ENCODE measurements at regions of chr2 and their contacts with region 1.

Region 1: DNA sequence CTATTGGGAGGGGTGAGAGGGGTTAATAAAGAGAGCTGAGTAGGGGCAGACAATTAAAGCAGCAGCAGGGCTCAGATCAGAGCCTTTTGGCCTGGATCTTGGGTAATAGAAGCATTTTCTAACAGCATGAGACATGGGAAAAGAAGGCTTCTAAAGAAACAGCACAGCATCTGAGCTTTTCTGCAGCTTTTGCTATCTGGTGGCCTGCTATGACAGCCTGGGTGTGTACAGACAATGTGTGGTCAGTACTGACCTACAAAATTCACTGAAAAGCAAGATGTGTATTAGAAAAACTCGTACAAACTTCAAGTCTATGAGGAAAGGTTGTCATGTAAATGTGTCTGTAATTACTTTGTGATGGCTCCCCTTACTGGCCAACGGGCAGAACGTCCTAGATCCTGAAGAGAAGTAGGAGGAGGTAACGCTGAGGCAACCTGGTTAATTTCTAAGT is 95.6 kb downstream of the GALNT3 start:
- DNase-seq: peak; percentile 27
- ATAC-seq: peak; percentile 95
- H3K4me3 ChIP-seq: no peak overlapping the region
- H3K27ac ChIP-seq: no peak overlapping the region
- H3K4me1 ChIP-seq: no peaks in the 10 kb centered on the region
- H3K27me3 ChIP-seq: no peaks in the 10 kb centered on the region
- CTCF ChIP-seq: peak; percentile 39 to 69 (median 64); a peak in 5 of 6 replicates
- EP300 ChIP-seq: no peak
- POLR2A ChIP-seq: no peak
- RAD21 ChIP-seq: peak; percentile 53

Region 2: GRCh38 chr2:165401285-165401852 is 297.1 kb before region 1 on chr2:
- CTCF ChIA-PET with region 1: interaction called, 100 read pairs
- POLR2A ChIA-PET with region 1: no interaction called
- RAD21 ChIA-PET with region 1: interaction called, 15 read pairs
- SMC1A ChIA-PET with region 1: interaction called, 114 read pairs
- in situ Hi-C with region 1: no loop called
- intact Hi-C with region 1: loop called (anchors 1 kb)
- DNase-seq: peak; percentile 9
- ATAC-seq: peak; percentile 77
- H3K4me3 ChIP-seq: no peak overlapping the region
- H3K27ac ChIP-seq: no peak overlapping the region
- H3K4me1 ChIP-seq: no peaks in the 10 kb centered on the region
- H3K27me3 ChIP-seq: no peaks in the 10 kb centered on the region
- CTCF ChIP-seq: peak; percentile 54 to 69 (median 66); a peak in 5 of 6 replicates
- EP300 ChIP-seq: no peak
- POLR2A ChIP-seq: no peak
- RAD21 ChIP-seq: peak; percentile 81

Region 3: GRCh38 chr2:165450156-165450555 is 248.3 kb before region 1 on chr2:
- CTCF ChIA-PET with region 1: interaction called, 56 read pairs
- POLR2A ChIA-PET with region 1: no interaction called
- RAD21 ChIA-PET with region 1: interaction called, 20 read pairs
- SMC1A ChIA-PET with region 1: interaction called, 45 read pairs
- in situ Hi-C with region 1: no loop called
- intact Hi-C with region 1: no loop called
- DNase-seq: no peak
- ATAC-seq: peak; percentile 59
- H3K4me3 ChIP-seq: no peak overlapping the region
- H3K27ac ChIP-seq: no peak overlapping the region
- H3K4me1 ChIP-seq: no peaks in the 10 kb centered on the region
- H3K27me3 ChIP-seq: no peaks in the 10 kb centered on the region
- CTCF ChIP-seq: no peak; a peak in 1 of 6 replicates
- EP300 ChIP-seq: no peak
- POLR2A ChIP-seq: no peak
- RAD21 ChIP-seq: no peak

Region 4: GRCh38 chr2:165499131-165499530 is 199.3 kb before region 1 on chr2:
- CTCF ChIA-PET with region 1: interaction called, 10 read pairs
- POLR2A ChIA-PET with region 1: no interaction called
- RAD21 ChIA-PET with region 1: interaction called, 3 read pairs
- SMC1A ChIA-PET with region 1: interaction called, 8 read pairs
- in situ Hi-C with region 1: no loop called
- intact Hi-C with region 1: no loop called
- DNase-seq: no peak
- ATAC-seq: no peak
- H3K4me3 ChIP-seq: no peak overlapping the region
- H3K27ac ChIP-seq: no peak overlapping the region
- H3K4me1 ChIP-seq: no peaks in the 10 kb centered on the region
- H3K27me3 ChIP-seq: no peaks in the 10 kb centered on the region
- CTCF ChIP-seq: no peak
- EP300 ChIP-seq: no peak
- POLR2A ChIP-seq: no peak
- RAD21 ChIP-seq: no peak

Region 5: GRCh38 chr2:165601928-165602521 is 96.4 kb before region 1 on chr2:
- CTCF ChIA-PET with region 1: interaction called, 14 read pairs
- POLR2A ChIA-PET with region 1: no interaction called
- RAD21 ChIA-PET with region 1: interaction called, 4 read pairs
- SMC1A ChIA-PET with region 1: interaction called, 5 read pairs
- in situ Hi-C with region 1: no loop called
- intact Hi-C with region 1: no loop called
- DNase-seq: no peak
- ATAC-seq: no peak
- H3K4me3 ChIP-seq: no peak overlapping the region
- H3K27ac ChIP-seq: no peak overlapping the region
- H3K4me1 ChIP-seq: no peaks in the 10 kb centered on the region
- H3K27me3 ChIP-seq: no peaks in the 10 kb centered on the region
- CTCF ChIP-seq: no peak
- EP300 ChIP-seq: no peak
- POLR2A ChIP-seq: no peak
- RAD21 ChIP-seq: no peak

Region 6: DNA sequence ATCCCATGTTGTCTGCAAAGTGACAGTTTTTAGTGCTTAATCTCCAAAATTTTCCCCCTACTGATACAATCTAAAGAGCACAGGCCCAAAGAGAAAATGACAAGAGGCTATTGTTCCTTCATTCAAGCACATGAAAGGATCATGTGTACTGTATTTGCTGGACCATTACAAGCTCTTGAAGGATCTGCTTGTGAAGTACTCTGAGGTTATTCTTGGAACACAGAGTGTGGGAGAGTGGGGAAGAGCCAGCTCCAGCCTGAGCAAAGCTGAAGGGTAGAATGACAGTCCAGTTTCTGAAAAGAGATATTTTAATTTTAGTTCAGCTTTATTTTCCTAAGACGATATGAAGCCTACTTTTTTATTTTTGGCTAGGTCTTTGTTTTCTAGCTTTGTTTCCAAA is 16.6 kb before region 1 on chr2:
- CTCF ChIA-PET with region 1: interaction called, 34 read pairs
- POLR2A ChIA-PET with region 1: interaction called, 4 read pairs
- RAD21 ChIA-PET with region 1: interaction called, 4 read pairs
- SMC1A ChIA-PET with region 1: interaction called, 31 read pairs
- in situ Hi-C with region 1: no loop called
- intact Hi-C with region 1: no loop called
- DNase-seq: no peak
- ATAC-seq: no peak
- H3K4me3 ChIP-seq: no peak overlapping the region
- H3K27ac ChIP-seq: no peak overlapping the region
- H3K4me1 ChIP-seq: no peaks in the 10 kb centered on the region
- H3K27me3 ChIP-seq: no peaks in the 10 kb centered on the region
- CTCF ChIP-seq: no peak
- EP300 ChIP-seq: no peak
- POLR2A ChIP-seq: no peak
- RAD21 ChIP-seq: no peak

Region 7: DNA sequence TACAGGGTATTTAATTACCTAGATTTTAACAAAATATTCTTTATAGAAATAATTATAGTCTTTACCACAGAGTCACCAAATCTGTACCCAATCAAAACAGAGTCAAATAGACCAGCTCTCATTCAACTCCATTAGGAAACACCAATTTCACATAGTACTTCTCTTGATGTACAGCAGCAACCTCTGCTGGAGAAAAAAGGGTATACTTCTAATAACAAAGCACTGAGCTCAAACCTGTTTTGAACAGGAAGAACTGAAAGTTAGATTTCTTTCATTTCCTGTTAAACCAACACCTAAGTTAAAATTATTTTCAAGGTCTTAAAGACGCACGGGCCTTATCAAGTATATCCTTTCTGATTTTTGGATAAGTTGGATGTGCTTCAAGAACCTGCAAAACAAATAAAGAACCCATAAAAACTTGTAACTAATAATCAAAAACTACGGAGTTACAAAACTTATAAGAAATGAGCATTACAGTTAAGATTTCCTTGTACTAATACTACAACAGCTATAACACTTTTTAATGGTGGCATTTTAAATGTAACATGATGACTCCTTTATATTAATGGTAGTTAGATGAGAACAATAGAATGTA is 176.1 kb after region 1 on chr2:
- CTCF ChIA-PET with region 1: interaction called, 17 read pairs
- POLR2A ChIA-PET with region 1: no interaction called
- RAD21 ChIA-PET with region 1: interaction called, 21 read pairs
- SMC1A ChIA-PET with region 1: interaction called, 37 read pairs
- in situ Hi-C with region 1: no loop called
- intact Hi-C with region 1: loop called (anchors 5 kb)
- DNase-seq: peak; percentile 36
- ATAC-seq: peak; percentile 86
- H3K4me3 ChIP-seq: no peak overlapping the region
- H3K27ac ChIP-seq: peak overlapping the region; percentile 12; the same call in 1 of the 2 replicates
- H3K4me1 ChIP-seq: peaks cover 7% of the 10 kb centered on the region; the same call in 1 of the 2 replicates
- H3K27me3 ChIP-seq: no peaks in the 10 kb centered on the region
- CTCF ChIP-seq: peak; percentile 60 to 81 (median 66)
- EP300 ChIP-seq: no peak
- POLR2A ChIP-seq: no peak
- RAD21 ChIP-seq: peak; percentile 91